ENCODE measurements at regions of chr7 and their contacts with region 1.

Region 1: GRCh38 chr7:92447345-92448204 is at the start of gene GATAD1:
- DNase-seq: peak; percentile 89
- ATAC-seq: peak; percentile 90
- H3K4me3 ChIP-seq: peak within 1 kb of the TSS; percentile 93
- H3K27ac ChIP-seq: peak within 1 kb of the TSS; percentile 61
- H3K4me1 ChIP-seq: peaks cover 15% of the 10 kb centered on the region
- H3K27me3 ChIP-seq: no peaks in the 10 kb centered on the region
- CTCF ChIP-seq: peak; percentile 80
- total RNA-seq, gene GATAD1: 15.8 and 20.0 TPM in 2 replicates

Region 2: GRCh38 chr7:91880413-91881241 is 566.9 kb before region 1 on chr7 and contains the start of gene MTERF1:
- CTCF ChIA-PET with region 1: no interaction called
- POLR2A ChIA-PET with region 1: interaction called, 3 read pairs
- intact Hi-C with region 1: loop called (anchors 5 kb)
- DNase-seq: peak; percentile 93
- ATAC-seq: peak; percentile 94
- H3K4me3 ChIP-seq: peak within 1 kb of the TSS; percentile 91
- H3K27ac ChIP-seq: peak within 1 kb of the TSS; percentile 1; the same call in 1 of the 2 replicates
- H3K4me1 ChIP-seq: peaks cover 7% of the 10 kb centered on the region; the same call in 1 of the 2 replicates
- H3K27me3 ChIP-seq: no peaks in the 10 kb centered on the region
- CTCF ChIP-seq: peak; percentile 99
- total RNA-seq, gene MTERF1: 4.0 and 10.0 TPM in 2 replicates

Region 3: DNA sequence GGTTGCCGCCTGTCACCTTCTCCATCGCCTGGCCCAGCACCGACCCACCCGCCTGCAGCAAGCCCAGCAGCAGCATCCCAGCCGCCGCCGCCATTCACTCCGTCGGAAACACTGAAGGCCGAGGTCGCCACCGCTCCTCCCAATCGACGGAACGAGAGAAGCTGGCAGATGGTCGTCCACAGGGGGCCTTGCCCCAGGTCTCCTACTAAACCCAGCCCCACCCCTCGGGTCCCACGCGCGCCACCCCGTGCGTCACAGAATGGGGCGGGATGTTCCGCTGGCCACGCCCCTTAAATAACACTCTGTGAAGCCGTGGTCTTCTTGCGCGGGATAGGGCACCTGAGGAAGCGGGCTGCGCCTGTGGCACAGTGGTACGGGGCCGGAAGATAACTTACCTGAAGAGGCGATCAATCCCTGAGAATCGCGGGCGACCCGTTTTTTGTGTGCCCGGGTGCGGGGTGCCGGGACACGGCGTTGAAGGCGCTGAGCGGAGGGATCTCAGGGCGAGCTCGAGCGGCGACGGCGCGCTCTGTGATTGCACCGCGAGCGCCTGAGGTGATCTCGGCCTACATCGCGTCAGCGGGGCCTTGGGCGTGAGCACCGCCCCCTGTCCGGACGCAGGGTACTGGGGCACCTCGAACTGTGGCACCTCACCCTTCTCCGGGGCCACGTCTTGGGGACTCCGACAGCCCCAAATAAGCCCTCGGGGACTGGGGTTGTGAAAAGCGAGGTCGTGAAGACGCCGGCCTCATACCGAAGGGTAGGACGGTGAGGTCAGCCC is 313.1 kb before region 1 on chr7 and contains the start of gene CYP51A1:
- CTCF ChIA-PET with region 1: no interaction called
- POLR2A ChIA-PET with region 1: no interaction called
- intact Hi-C with region 1: loop called (anchors 1 kb)
- DNase-seq: peak; percentile 84
- ATAC-seq: peak; percentile 86
- H3K4me3 ChIP-seq: peak within 1 kb of the TSS; percentile 82
- H3K27ac ChIP-seq: peak within 1 kb of the TSS; percentile 88
- H3K4me1 ChIP-seq: peaks cover 22% of the 10 kb centered on the region; the same call in 1 of the 2 replicates
- H3K27me3 ChIP-seq: no peaks in the 10 kb centered on the region
- CTCF ChIP-seq: no peak
- total RNA-seq, gene CYP51A1: 52.3 and 58.3 TPM in 2 replicates

Region 4: GRCh38 chr7:92245487-92246362 is 201.8 kb before region 1 on chr7 and contains the starts of genes ANKIB1 and KRIT1:
- CTCF ChIA-PET with region 1: interaction called, 4 read pairs
- POLR2A ChIA-PET with region 1: no interaction called
- intact Hi-C with region 1: loop called (anchors 2 kb)
- DNase-seq: peak; percentile 83
- ATAC-seq: peak; percentile 78
- H3K4me3 ChIP-seq: peak within 1 kb of the TSS; percentile 92
- H3K27ac ChIP-seq: peak within 1 kb of the TSS; percentile 84
- H3K4me1 ChIP-seq: peaks cover 21% of the 10 kb centered on the region
- H3K27me3 ChIP-seq: no peaks in the 10 kb centered on the region
- CTCF ChIP-seq: no peak
- total RNA-seq, gene ANKIB1: 25.1 and 32.1 TPM in 2 replicates
- total RNA-seq, gene KRIT1: 23.7 and 46.4 TPM in 2 replicates

Region 5: GRCh38 chr7:92460109-92460508 is 12.5 kb after region 1 on chr7:
- CTCF ChIA-PET with region 1: interaction called, 6 read pairs
- POLR2A ChIA-PET with region 1: no interaction called
- intact Hi-C with region 1: loop called (anchors 1 kb)
- DNase-seq: peak; percentile 78
- ATAC-seq: peak; percentile 87
- H3K4me3 ChIP-seq: no peak overlapping the region
- H3K27ac ChIP-seq: no peak overlapping the region
- H3K4me1 ChIP-seq: peaks cover 23% of the 10 kb centered on the region
- H3K27me3 ChIP-seq: no peaks in the 10 kb centered on the region
- CTCF ChIP-seq: no peak

Measured in PC-3 (cell line).